Panc1 (cell line): ENCODE measurements at regions of chr4 and their contacts with region 1.

Region 1: GRCh38 chr4:183504064-183504929 is 561 bp upstream of the ING2 start:
- DNase-seq: no peak
- ATAC-seq: peak; percentile 84
- H3K4me3 ChIP-seq: peak overlapping the region; percentile 84 to 93
- H3K27ac ChIP-seq: peak overlapping the region; percentile 89
- H3K4me1 ChIP-seq: peaks cover 14% of the 10 kb centered on the region
- H3K27me3 ChIP-seq: no peaks in the 10 kb centered on the region
- CTCF ChIP-seq: peak; percentile 53

Region 2: DNA sequence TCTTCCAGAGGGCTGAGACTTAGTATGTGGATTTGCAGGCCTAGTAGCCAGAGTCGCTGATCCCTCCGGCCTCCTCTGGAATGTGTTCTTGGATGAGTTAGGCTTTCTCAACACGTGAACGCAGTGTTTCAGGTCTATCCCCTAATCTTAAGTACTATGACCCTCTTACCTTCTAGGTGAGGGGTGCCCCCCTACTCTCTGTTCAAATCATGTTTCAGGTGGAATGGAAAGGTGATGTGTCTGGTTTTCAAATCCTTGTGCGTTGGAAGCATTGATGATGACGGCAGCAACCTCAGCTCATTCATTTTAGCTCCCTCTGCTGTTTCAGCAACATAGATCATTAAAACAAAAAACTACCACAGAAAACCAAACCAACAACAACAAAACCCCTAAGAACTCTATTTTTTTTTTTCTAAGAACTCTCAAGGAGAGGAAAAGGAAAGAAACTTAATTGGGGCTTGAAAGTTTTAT is 98.3 kb after region 1 on chr4:
- CTCF ChIA-PET with region 1: no interaction called
- POLR2A ChIA-PET with region 1: no interaction called
- in situ Hi-C with region 1: no loop called
- intact Hi-C with region 1: loop called (anchors 10 kb)
- DNase-seq: no peak
- ATAC-seq: no peak
- H3K4me3 ChIP-seq: no peak overlapping the region
- H3K27ac ChIP-seq: no peak overlapping the region
- H3K4me1 ChIP-seq: no peaks in the 10 kb centered on the region
- H3K27me3 ChIP-seq: no peaks in the 10 kb centered on the region
- CTCF ChIP-seq: no peak; the same call in 1 of the 2 replicates

Region 3: DNA sequence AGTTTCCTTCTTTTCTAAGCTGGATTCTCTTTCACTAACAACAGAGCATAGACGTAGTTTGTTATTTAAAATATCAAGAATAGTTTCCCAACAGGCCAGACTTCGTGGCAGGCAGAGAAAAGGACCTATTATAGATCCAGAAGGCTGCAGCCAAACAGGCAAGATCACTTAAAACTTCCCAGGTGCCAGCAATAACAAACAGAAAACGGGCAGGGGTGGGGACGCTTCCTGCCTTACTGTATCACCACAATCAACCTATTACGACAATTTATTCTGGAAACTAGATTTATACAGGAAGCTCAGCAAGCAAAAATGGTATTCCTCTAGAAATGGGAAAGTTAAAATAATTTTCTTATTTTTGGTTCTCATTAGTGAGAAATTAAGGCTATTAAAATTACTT is 132.6 kb after region 1 on chr4:
- CTCF ChIA-PET with region 1: no interaction called
- POLR2A ChIA-PET with region 1: interaction called, 3 read pairs
- in situ Hi-C with region 1: no loop called
- intact Hi-C with region 1: loop called (anchors 10 kb)
- DNase-seq: no peak
- ATAC-seq: peak; percentile 66; the same call in 1 of the 2 replicates
- H3K4me3 ChIP-seq: peak overlapping the region; percentile 36 to 53
- H3K27ac ChIP-seq: peak overlapping the region; percentile 89
- H3K4me1 ChIP-seq: peaks cover 24% of the 10 kb centered on the region
- H3K27me3 ChIP-seq: no peaks in the 10 kb centered on the region
- CTCF ChIP-seq: no peak